Aorta (tissue), 5 donors: ENCODE measurements at regions of chr7 and their contacts with region 1.

Region 1: DNA sequence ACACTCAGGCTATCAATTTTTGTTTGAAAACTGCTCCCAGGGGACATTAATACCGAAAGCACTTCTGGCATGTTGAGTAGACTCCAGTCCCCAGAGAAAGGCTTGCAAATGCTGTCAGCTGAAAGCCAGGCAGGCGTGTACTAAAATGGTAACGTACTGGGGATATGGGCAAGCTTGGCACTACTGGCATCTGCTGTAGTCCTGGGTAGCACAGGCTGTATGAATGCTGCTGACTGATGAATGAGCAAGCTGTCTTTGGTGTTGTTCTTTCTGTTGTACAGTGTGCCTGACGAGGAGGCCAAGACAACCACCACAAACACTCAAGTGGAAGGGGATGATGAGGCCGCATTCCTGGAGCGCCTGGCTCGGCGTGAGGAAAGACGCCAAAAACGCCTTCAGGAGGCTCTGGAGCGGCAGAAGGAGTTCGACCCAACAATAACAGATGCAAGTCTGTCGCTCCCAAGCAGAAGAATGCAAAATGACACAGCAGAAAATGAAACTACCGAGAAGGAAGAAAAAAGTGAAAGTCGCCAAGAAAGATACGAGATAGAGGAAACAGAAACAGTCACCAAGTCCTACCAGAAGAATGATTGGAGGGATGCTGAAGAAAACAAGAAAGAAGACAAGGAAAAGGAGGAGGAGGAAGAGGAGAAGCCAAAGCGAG is 53.5 kb upstream of the AGBL3 start:
- DNase-seq: peak; percentile 90 to 93
- ATAC-seq: peak; percentile 83
- H3K4me3 ChIP-seq: peak overlapping the region in 1 of 2 donors; percentile 34
- H3K27ac ChIP-seq: peak overlapping the region; percentile 93 to 94
- H3K4me1 ChIP-seq: peaks cover 5 to 17% of the 10 kb centered on the region in 2 donors
- H3K27me3 ChIP-seq: no peaks in the 10 kb centered on the region

Region 2: GRCh38 chr7:134605973-134606923 is 326.6 kb before region 1 on chr7:
- intact Hi-C with region 1: no loop called
- DNase-seq: peak in 1 of 2 donors; percentile 67
- ATAC-seq: peak; percentile 93
- H3K4me3 ChIP-seq: no peak overlapping the region
- H3K27ac ChIP-seq: no peak overlapping the region
- H3K4me1 ChIP-seq: no peaks in the 10 kb centered on the region
- H3K27me3 ChIP-seq: no peaks in the 10 kb centered on the region

Region 3: GRCh38 chr7:134686786-134687185 is 246.1 kb before region 1 on chr7:
- intact Hi-C with region 1: no loop called
- DNase-seq: no peak
- ATAC-seq: no peak
- H3K4me3 ChIP-seq: peak overlapping the region in 1 of 2 donors; percentile 21
- H3K27ac ChIP-seq: no peak overlapping the region
- H3K4me1 ChIP-seq: peaks cover 0 to 9% of the 10 kb centered on the region in 2 donors
- H3K27me3 ChIP-seq: no peaks in the 10 kb centered on the region

Region 4: DNA sequence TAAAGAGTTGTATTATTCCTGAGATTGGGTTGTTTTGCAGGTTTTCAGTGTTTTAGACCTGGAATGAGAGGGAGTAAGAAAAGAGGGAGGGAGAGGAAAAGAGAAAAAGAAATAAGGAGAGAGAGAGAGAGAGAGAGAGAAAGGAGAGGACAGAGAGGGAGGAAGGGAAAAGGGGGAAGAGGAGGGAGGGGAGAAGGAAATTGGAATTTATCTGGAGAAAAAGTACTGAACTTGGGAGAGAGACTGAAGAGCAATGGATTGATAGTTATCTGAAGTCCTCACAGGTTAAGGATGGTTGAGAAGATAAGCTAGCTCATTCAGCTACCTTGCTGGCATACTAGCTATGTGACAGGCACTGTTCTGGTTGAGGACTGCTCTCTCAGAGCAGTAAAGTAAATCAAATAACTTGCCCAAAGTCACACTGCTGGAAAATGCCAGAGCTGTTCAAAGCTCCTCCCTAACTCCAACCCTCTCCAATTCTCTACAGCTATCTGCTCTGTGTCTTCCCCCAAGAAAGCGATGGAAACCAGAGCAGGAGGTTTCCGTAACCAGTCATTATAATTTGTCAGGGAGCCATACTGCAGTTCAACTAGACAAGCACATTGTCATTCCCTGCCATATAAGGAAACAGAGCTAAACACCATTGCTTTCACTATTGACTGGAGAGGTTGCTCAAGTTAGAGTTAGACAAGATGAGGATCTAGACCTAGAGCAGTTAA is 142.7 kb before region 1 on chr7:
- intact Hi-C with region 1: no loop called
- DNase-seq: no peak
- ATAC-seq: peak; percentile 51
- H3K4me3 ChIP-seq: peak overlapping the region in 1 of 2 donors; percentile 41
- H3K27ac ChIP-seq: peak overlapping the region; percentile 89 to 97
- H3K4me1 ChIP-seq: peaks cover 14 to 17% of the 10 kb centered on the region in 2 donors
- H3K27me3 ChIP-seq: no peaks in the 10 kb centered on the region

Region 5: GRCh38 chr7:134891262-134891695 is 41.6 kb before region 1 on chr7:
- intact Hi-C with region 1: loop called in 1 of 2 experiments (anchors 5 kb)
- DNase-seq: peak; percentile 82 to 83
- ATAC-seq: peak; percentile 91
- H3K4me3 ChIP-seq: peak overlapping the region; percentile 1 to 71
- H3K27ac ChIP-seq: peak overlapping the region; percentile 1 to 99
- H3K4me1 ChIP-seq: peaks cover 4 to 14% of the 10 kb centered on the region in 2 donors
- H3K27me3 ChIP-seq: no peaks in the 10 kb centered on the region

Region 6: GRCh38 chr7:135320277-135320676 is 387.4 kb after region 1 on chr7:
- intact Hi-C with region 1: no loop called
- DNase-seq: peak; percentile 82 to 92
- ATAC-seq: no peak
- H3K4me3 ChIP-seq: no peak overlapping the region
- H3K27ac ChIP-seq: no peak overlapping the region
- H3K4me1 ChIP-seq: no peaks in the 10 kb centered on the region
- H3K27me3 ChIP-seq: no peaks in the 10 kb centered on the region